Activated CD8-positive, alpha-beta T cell treated with anti-CD3 and anti-CD28 coated beads for 36 hours (primary cell): ENCODE measurements at regions of chr6 and their contacts with region 1.

Region 1: DNA sequence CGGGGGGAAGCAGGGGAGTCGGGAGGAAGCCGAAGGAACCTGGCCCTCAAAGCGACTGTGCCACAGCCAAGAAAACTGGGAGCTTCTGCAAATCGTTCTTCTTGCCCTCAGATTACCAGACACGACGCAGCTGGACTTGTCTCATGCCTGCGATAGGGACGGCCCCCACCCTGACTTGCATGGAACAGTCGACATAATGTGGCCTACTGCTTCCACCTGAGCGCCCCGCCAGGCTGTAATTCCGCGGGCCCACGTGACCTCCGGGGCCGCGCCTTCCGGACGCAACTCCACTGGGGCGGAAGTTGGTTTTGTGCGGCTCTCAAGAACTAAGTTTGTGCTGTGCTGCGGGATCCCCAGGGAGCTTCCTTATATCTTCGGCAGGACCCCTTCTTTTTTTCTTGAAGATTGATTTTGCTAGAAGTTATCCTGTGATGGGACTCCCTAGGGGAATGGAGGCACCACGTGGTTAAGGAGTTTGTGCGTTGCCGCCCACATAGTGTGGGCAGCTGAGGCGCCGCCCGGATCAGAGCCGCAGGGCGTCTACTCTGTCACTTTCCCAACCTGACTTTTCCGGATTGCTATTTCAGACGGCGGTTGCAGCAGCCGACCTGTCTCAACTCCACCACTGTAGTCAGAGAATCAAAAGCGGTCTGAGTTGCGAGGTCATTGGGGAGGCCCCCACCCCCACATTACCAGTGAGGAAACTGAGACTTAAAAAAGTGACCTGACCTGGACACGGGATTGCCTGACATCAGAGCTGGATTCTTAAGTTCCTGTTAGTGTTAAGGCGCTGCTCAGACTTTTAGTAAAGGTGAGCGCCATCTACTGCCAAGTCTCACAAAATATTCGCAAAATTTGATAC is 540 bp upstream of the CD164 start:
- DNase-seq: peak; percentile 94
- ATAC-seq: peak; percentile 69
- H3K4me3 Mint-ChIP-seq: peak overlapping the region; percentile 84
- H3K27ac Mint-ChIP-seq: peak overlapping the region; percentile 100
- H3K4me1 Mint-ChIP-seq: peaks cover 31% of the 10 kb centered on the region
- H3K27me3 Mint-ChIP-seq: no peaks in the 10 kb centered on the region
- CTCF ChIP-seq: peak; percentile 87

Region 2: DNA sequence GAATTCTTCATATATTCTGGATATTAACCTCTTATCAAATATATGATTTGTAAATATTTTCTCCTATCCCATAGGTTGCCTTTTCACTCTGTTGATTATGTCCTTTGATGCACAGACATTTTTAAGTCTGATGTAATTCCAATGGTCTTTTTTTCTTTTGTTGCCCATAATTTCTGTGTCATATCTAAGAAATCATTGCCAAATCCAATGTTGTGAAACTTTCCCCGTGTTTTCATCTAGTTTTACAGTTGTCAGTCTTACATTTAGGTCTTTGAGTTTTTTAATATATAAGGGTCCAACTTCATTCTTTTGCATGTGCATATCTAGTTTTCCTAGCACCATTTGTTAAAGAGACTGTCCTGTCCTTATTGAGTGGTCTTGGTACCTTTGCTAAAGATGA is 399.7 kb before region 1 on chr6:
- CTCF ChIA-PET with region 1: no interaction called
- POLR2A ChIA-PET with region 1: no interaction called
- intact Hi-C with region 1: no loop called
- DNase-seq: no peak
- ATAC-seq: no peak
- H3K4me3 Mint-ChIP-seq: no peak overlapping the region
- H3K27ac Mint-ChIP-seq: no peak overlapping the region
- H3K4me1 Mint-ChIP-seq: no peaks in the 10 kb centered on the region
- H3K27me3 Mint-ChIP-seq: no peaks in the 10 kb centered on the region
- CTCF ChIP-seq: no peak

Region 3: DNA sequence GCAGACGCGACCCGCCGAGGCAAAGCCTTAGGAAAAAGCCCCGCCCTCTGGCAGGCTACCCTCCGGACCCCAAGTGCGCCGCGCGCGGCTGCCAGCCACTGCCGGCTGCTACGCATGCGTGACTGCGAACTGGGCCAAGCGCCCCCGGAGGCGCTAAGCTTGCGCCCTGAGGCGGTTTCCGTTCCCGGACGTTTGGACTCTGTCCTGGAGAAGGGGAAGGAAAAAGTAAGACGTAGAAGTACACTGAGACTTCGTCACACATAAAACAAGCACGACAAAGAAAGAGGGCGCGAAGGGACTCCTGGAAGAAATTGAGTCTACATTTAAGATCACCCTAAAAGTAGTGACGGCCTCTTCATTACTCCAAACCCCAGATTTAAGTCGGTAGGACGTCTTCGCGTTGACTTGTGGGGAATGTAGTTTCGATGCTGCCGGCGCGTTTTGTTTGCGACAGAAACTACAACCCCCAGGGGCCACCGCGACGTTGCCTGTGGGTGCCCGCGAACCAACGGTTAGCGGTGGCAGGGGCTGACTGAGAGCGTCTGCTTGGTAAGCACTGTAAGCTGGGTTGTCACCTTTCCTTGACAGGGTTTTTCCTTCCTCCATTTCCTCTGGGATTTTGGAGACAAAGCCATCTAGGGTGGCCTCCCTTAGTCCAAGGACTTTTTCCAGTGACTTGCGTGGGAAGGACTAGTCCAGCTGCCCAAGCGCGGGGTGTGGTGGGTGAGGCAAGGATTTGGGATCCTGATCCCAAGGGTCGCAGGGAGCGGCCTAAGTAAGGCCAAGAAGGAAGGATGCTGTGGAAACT is 287.6 kb before region 1 on chr6 and contains the start of gene CEP57L1:
- CTCF ChIA-PET with region 1: interaction called, 3 read pairs
- POLR2A ChIA-PET with region 1: interaction called, 8 read pairs
- intact Hi-C with region 1: loop called (anchors 1 kb)
- DNase-seq: peak; percentile 97
- ATAC-seq: peak; percentile 80
- H3K4me3 Mint-ChIP-seq: peak within 1 kb of the TSS; percentile 89
- H3K27ac Mint-ChIP-seq: peak within 1 kb of the TSS; percentile 99
- H3K4me1 Mint-ChIP-seq: peaks cover 36% of the 10 kb centered on the region
- H3K27me3 Mint-ChIP-seq: no peaks in the 10 kb centered on the region
- CTCF ChIP-seq: no peak
- total RNA-seq, gene CEP57L1: 25.0 to 25.8 TPM

Region 4: GRCh38 chr6:109304284-109305015 is 78.4 kb before region 1 on chr6:
- CTCF ChIA-PET with region 1: interaction called, 11 read pairs
- POLR2A ChIA-PET with region 1: interaction called, 5 read pairs
- intact Hi-C with region 1: no loop called
- DNase-seq: peak; percentile 9
- ATAC-seq: no peak
- H3K4me3 Mint-ChIP-seq: no peak overlapping the region
- H3K27ac Mint-ChIP-seq: no peak overlapping the region
- H3K4me1 Mint-ChIP-seq: peaks cover 18% of the 10 kb centered on the region
- H3K27me3 Mint-ChIP-seq: peaks cover 3% of the 10 kb centered on the region
- CTCF ChIP-seq: no peak

Region 5: GRCh38 chr6:109440331-109441068 is 57.7 kb after region 1 on chr6 and contains the starts of genes PPIL6 and SMPD2:
- CTCF ChIA-PET with region 1: interaction called, 27 read pairs
- POLR2A ChIA-PET with region 1: interaction called, 18 read pairs
- intact Hi-C with region 1: no loop called
- DNase-seq: peak; percentile 80
- ATAC-seq: peak; percentile 91
- H3K4me3 Mint-ChIP-seq: peak within 1 kb of the TSS; percentile 92
- H3K27ac Mint-ChIP-seq: peak within 1 kb of the TSS; percentile 89
- H3K4me1 Mint-ChIP-seq: peaks cover 26% of the 10 kb centered on the region
- H3K27me3 Mint-ChIP-seq: no peaks in the 10 kb centered on the region
- CTCF ChIP-seq: no peak
- total RNA-seq, gene PPIL6: 0.27 to 0.38 TPM
- total RNA-seq, gene SMPD2: 8.7 to 9.6 TPM

Region 6: GRCh38 chr6:109472132-109472995 is 89.6 kb after region 1 on chr6:
- CTCF ChIA-PET with region 1: no interaction called
- POLR2A ChIA-PET with region 1: interaction called, 10 read pairs
- intact Hi-C with region 1: no loop called
- DNase-seq: no peak
- ATAC-seq: peak; percentile 41
- H3K4me3 Mint-ChIP-seq: no peak overlapping the region
- H3K27ac Mint-ChIP-seq: peak overlapping the region; percentile 53
- H3K4me1 Mint-ChIP-seq: peaks cover 76% of the 10 kb centered on the region
- H3K27me3 Mint-ChIP-seq: no peaks in the 10 kb centered on the region
- CTCF ChIP-seq: no peak